ENCODE measurements at regions of chr2 and their contacts with region 1.

Region 1: DNA sequence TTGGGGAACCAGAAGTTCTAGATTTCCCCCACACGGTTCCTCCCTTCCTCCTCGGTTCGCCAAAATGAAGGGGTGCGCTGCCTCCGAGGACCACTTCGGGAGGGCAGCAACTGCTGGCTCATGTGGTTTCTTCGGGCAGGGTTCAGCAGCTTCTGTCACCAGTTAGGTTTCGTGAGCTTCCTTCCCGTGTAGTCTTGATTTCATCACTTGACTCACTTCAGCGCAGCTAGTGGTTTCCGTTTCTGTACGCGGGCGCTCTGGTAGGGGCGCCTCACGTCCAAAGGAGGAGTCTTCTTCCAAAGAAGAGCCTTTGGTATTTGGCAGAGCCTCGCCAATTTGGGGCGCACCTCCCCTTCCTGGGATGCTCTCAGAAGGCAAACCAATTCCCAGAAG is 485 bp upstream of the GALNT3 start:
- DNase-seq: peak; percentile 87
- H3K4me3 ChIP-seq: peak overlapping the region; percentile 74 to 96 (median 80)
- H3K27ac ChIP-seq: peak overlapping the region; percentile 96
- H3K4me1 ChIP-seq: peaks cover 15% of the 10 kb centered on the region
- H3K27me3 ChIP-seq: no peaks in the 10 kb centered on the region
- CTCF ChIP-seq: no peak

Region 2: GRCh38 chr2:165706960-165707487 is 87.5 kb before region 1 on chr2:
- CTCF ChIA-PET with region 1: no interaction called
- dilution Hi-C with region 1: no loop called
- in situ Hi-C with region 1: no loop called
- intact Hi-C with region 1: no loop called
- DNase-seq: no peak
- H3K4me3 ChIP-seq: no peak overlapping the region
- H3K27ac ChIP-seq: no peak overlapping the region
- H3K4me1 ChIP-seq: no peaks in the 10 kb centered on the region
- H3K27me3 ChIP-seq: no peaks in the 10 kb centered on the region
- CTCF ChIP-seq: no peak

Region 3: DNA sequence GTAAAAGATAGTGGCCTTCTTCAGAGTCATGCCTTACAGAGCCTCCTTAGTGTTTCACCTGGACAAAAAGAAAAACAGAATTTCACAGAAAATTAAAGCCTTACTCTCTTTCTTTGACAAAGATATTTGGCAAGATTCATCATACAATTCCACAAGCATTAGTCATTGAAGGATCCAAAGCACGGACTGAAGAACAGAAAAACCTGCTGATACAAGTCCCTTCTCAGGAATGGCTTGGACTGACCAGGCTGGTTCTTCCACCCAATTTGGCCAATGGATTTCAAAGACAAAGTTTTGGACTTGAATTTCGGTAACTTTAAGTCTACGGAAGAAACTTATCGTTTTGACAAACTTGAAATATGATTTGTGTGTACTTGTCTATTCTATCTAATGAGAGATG is 38.6 kb after region 1 on chr2:
- CTCF ChIA-PET with region 1: no interaction called
- dilution Hi-C with region 1: no loop called
- in situ Hi-C with region 1: no loop called
- intact Hi-C with region 1: loop called (anchors 2 kb)
- DNase-seq: peak; percentile 86
- H3K4me3 ChIP-seq: peak overlapping the region in 1 of 3 experiments; percentile 19
- H3K27ac ChIP-seq: peak overlapping the region; percentile 45
- H3K4me1 ChIP-seq: peaks cover 25% of the 10 kb centered on the region
- H3K27me3 ChIP-seq: no peaks in the 10 kb centered on the region
- CTCF ChIP-seq: no peak

Region 4: GRCh38 chr2:165953655-165954606 is 159.4 kb after region 1 on chr2 and contains the start of gene TTC21B:
- CTCF ChIA-PET with region 1: no interaction called
- dilution Hi-C with region 1: no loop called
- in situ Hi-C with region 1: no loop called
- intact Hi-C with region 1: no loop called
- DNase-seq: peak; percentile 94
- H3K4me3 ChIP-seq: peak within 1 kb of the TSS; percentile 79 to 95 (median 84)
- H3K27ac ChIP-seq: peak within 1 kb of the TSS; percentile 85
- H3K4me1 ChIP-seq: peaks cover 5% of the 10 kb centered on the region
- H3K27me3 ChIP-seq: no peaks in the 10 kb centered on the region
- CTCF ChIP-seq: peak; percentile 68 to 71
- total RNA-seq, gene TTC21B: 9.3 to 20.7 TPM

Region 5: GRCh38 chr2:166410828-166411472 is 616.4 kb after region 1 on chr2:
- CTCF ChIA-PET with region 1: no interaction called
- dilution Hi-C with region 1: no loop called
- in situ Hi-C with region 1: no loop called
- intact Hi-C with region 1: loop called (anchors 5 kb)
- DNase-seq: peak; percentile 84
- H3K4me3 ChIP-seq: no peak overlapping the region
- H3K27ac ChIP-seq: peak overlapping the region; percentile 91
- H3K4me1 ChIP-seq: peaks cover 26% of the 10 kb centered on the region
- H3K27me3 ChIP-seq: no peaks in the 10 kb centered on the region
- CTCF ChIP-seq: no peak